Ascending aorta (tissue), 2 donors: ENCODE measurements at regions of chr2 and their contacts with region 1.

Region 1: DNA sequence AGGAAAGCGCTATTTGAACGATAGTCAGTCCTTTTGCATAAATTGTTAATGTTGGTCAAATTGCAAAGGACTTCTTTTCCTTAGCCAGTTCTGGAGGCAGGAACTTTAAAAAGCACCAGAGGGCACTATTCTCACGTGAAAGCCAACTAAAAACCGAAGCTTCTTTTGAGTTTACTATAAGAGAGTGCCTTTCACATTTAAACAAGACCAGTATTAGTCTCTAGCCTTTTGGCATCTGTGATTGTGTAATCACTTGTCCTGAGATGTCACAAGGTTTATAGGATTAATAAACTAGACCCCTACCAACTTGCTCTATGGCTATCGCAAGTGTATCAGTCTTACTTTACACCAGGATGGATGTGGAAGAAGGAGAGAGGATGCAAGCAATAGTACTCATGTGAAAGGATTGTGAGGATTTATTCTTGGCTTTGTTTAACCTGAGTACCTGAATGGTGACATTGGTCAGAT is 14.4 kb upstream of the STAT4 start:
- DNase-seq: no peak
- H3K4me3 ChIP-seq: no peak overlapping the region
- H3K27ac ChIP-seq: no peak overlapping the region
- H3K4me1 ChIP-seq: peaks cover 7 to 21% of the 10 kb centered on the region in 2 donors
- H3K27me3 ChIP-seq: no peaks in the 10 kb centered on the region
- CTCF ChIP-seq: peak; percentile 39 to 79 (median 73)

Region 2: DNA sequence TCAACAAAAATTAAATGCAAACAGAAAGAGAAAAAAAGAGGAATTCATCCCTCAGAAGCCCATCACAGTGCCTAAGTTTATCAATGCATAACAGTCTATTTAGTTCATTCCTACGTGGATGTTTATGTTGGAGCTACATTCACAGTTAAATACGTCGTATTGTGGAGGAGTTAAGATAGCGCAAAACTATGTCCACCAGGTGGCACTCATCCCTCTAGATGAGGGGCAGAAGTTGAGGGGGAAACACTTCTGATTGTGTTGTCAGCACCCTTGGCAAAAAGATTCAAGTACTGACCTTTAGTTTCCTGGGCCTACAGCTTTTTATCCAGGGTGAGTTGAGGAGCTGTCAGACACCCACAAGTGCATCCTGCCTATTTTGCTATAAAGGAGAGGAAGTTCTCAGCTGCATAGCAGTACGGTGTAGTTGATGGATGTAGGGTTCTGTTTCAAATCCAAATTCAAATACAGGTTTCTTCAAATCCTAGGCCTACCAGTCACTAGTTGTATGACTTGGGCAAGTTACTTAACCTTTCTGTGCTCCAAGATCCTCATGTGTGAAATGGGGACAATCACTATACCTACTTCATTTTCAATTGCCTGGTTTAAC is 53.2 kb after region 1 on chr2:
- intact Hi-C with region 1: loop called (anchors 5 kb)
- DNase-seq: no peak
- H3K4me3 ChIP-seq: no peak overlapping the region
- H3K27ac ChIP-seq: no peak overlapping the region
- H3K4me1 ChIP-seq: peaks cover 0 to 11% of the 10 kb centered on the region in 2 donors
- H3K27me3 ChIP-seq: no peaks in the 10 kb centered on the region
- CTCF ChIP-seq: peak; percentile 11 to 66 (median 59)

Region 3: DNA sequence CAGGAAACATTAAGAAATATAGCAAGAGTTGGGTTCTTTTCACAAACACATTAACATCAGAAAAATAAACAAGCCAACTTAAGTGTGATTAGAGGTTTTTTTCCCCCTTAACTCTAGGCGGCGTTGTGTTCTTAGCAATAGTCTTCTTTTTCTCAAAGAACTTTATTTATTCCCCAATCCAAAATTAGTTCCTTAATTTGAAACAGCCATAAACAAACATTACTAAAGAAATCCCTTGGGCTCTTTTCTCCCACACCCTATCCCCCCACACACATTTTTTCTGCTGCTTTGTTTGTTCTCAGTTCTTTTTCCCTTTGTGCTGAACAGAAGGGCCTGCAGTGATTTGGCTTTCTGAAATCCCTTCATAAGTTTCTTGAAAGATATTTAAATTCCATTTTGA is 66.8 kb after region 1 on chr2:
- intact Hi-C with region 1: loop called (anchors 5 kb)
- DNase-seq: no peak
- H3K4me3 ChIP-seq: no peak overlapping the region
- H3K27ac ChIP-seq: no peak overlapping the region
- H3K4me1 ChIP-seq: no peaks in the 10 kb centered on the region
- H3K27me3 ChIP-seq: no peaks in the 10 kb centered on the region
- CTCF ChIP-seq: peak; percentile 18 to 48 (median 34)

Region 4: GRCh38 chr2:191410646-191411436 is 245.6 kb after region 1 on chr2:
- intact Hi-C with region 1: loop called (anchors 5 kb)
- DNase-seq: peak in 1 of 2 donors; percentile 70
- H3K4me3 ChIP-seq: no peak overlapping the region
- H3K27ac ChIP-seq: peak overlapping the region; percentile 53 to 71
- H3K4me1 ChIP-seq: peaks cover 0 to 28% of the 10 kb centered on the region in 2 donors
- H3K27me3 ChIP-seq: no peaks in the 10 kb centered on the region
- CTCF ChIP-seq: no peak

Region 5: GRCh38 chr2:191501561-191502168 is 336.5 kb after region 1 on chr2:
- intact Hi-C with region 1: loop called (anchors 1 kb)
- DNase-seq: no peak
- H3K4me3 ChIP-seq: no peak overlapping the region
- H3K27ac ChIP-seq: peak overlapping the region; percentile 3 to 36
- H3K4me1 ChIP-seq: peaks cover 0 to 15% of the 10 kb centered on the region in 2 donors
- H3K27me3 ChIP-seq: no peaks in the 10 kb centered on the region
- CTCF ChIP-seq: peak; percentile 57 to 75 (median 66)

Region 6: GRCh38 chr2:191521608-191522208 is 356.5 kb after region 1 on chr2:
- intact Hi-C with region 1: loop called (anchors 1 kb)
- DNase-seq: no peak
- H3K4me3 ChIP-seq: no peak overlapping the region
- H3K27ac ChIP-seq: no peak overlapping the region
- H3K4me1 ChIP-seq: no peaks in the 10 kb centered on the region
- H3K27me3 ChIP-seq: no peaks in the 10 kb centered on the region
- CTCF ChIP-seq: peak; percentile 52 to 72 (median 68)